ENCODE measurements at regions of chr12 and their contacts with region 1.

Region 1: GRCh38 chr12:51033457-51034089 is 7.4 kb upstream of the SLC11A2 start:
- DNase-seq: no peak
- ATAC-seq: no peak
- H3K4me3 ChIP-seq: no peak overlapping the region
- H3K27ac ChIP-seq: no peak overlapping the region
- H3K4me1 ChIP-seq: peaks cover 8% of the 10 kb centered on the region; the same call in 1 of the 2 replicates
- H3K27me3 ChIP-seq: no peaks in the 10 kb centered on the region
- CTCF ChIP-seq: no peak

Region 2: GRCh38 chr12:50187084-50187900 is 846.3 kb before region 1 on chr12:
- CTCF ChIA-PET with region 1: no interaction called
- POLR2A ChIA-PET with region 1: no interaction called
- in situ Hi-C with region 1: no loop called
- intact Hi-C with region 1: no loop called
- DNase-seq: no peak
- ATAC-seq: peak; percentile 26; the same call in 1 of the 2 replicates
- H3K4me3 ChIP-seq: no peak overlapping the region
- H3K27ac ChIP-seq: peak overlapping the region; percentile 73
- H3K4me1 ChIP-seq: peaks cover 29% of the 10 kb centered on the region
- H3K27me3 ChIP-seq: no peaks in the 10 kb centered on the region
- CTCF ChIP-seq: no peak

Region 3: DNA sequence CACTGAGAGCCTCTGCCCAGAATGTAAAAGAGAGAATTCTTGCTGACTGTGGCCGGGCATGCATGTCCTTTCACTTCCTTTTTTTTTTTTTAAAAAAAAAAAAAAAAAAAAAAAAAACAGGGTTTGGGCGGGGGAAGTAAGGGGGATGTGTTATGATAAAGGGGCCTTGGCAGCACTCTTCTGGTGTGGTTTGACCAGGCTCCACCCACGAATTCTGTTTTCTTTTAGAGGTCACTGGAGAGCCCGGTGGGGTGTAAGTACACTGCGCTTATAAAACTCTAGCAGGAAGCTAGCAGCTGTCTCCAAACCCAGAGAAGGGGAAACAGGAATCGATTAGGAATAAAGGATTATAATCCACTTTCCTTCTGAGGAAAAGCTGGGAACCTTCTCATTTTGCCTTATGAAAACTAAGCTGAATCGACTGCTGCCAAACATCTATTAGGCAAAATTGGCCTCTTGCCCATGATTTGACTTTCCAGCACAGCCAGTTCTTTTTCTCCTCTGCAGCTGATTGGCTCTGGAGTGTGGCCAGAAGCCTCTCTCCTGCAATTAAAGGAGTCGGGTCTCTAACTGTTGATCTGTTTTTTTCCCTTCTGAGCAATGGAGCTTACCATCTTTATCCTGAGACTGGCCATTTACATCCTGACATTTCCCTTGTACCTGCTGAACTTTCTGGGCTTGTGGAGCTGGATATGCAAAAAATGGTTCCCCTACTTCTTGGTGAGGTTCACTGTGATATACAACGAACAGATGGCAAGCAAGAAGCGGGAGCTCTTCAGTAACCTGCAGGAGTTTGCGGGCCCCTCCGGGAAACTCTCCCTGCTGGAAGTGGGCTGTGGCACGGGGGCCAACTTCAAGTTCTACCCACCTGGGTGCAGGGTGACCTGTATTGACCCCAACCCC is 108.9 kb before region 1 on chr12:
- CTCF ChIA-PET with region 1: interaction called, 16 read pairs
- POLR2A ChIA-PET with region 1: no interaction called
- in situ Hi-C with region 1: no loop called
- intact Hi-C with region 1: no loop called
- DNase-seq: no peak
- ATAC-seq: no peak
- H3K4me3 ChIP-seq: peak overlapping the region in 1 of 2 experiments; percentile 26; a peak in 1 of 4 replicates
- H3K27ac ChIP-seq: no peak overlapping the region
- H3K4me1 ChIP-seq: no peaks in the 10 kb centered on the region
- H3K27me3 ChIP-seq: no peaks in the 10 kb centered on the region
- CTCF ChIP-seq: no peak

Region 4: DNA sequence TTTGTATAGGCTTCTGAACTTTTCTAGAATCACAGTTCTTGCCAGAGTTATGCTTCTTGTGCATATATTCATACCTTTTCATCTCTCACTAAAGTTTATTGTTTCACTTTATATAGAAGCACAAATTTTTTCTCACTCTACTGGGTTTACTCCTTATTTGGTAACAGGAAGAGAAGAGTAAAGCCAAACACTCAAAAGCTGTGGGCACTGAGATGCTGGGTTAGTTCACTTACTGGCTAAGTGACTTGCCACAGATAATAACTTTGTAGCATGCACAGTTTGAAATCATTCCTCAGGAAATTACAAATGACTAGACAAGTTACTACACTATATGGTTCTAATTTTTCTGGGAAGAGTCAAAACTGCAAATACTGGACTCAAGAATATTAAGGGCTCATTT is 73.4 kb before region 1 on chr12:
- CTCF ChIA-PET with region 1: no interaction called
- POLR2A ChIA-PET with region 1: no interaction called
- in situ Hi-C with region 1: no loop called
- intact Hi-C with region 1: no loop called
- DNase-seq: no peak
- ATAC-seq: no peak
- H3K4me3 ChIP-seq: no peak overlapping the region
- H3K27ac ChIP-seq: no peak overlapping the region
- H3K4me1 ChIP-seq: no peaks in the 10 kb centered on the region
- H3K27me3 ChIP-seq: no peaks in the 10 kb centered on the region
- CTCF ChIP-seq: no peak

Region 5: DNA sequence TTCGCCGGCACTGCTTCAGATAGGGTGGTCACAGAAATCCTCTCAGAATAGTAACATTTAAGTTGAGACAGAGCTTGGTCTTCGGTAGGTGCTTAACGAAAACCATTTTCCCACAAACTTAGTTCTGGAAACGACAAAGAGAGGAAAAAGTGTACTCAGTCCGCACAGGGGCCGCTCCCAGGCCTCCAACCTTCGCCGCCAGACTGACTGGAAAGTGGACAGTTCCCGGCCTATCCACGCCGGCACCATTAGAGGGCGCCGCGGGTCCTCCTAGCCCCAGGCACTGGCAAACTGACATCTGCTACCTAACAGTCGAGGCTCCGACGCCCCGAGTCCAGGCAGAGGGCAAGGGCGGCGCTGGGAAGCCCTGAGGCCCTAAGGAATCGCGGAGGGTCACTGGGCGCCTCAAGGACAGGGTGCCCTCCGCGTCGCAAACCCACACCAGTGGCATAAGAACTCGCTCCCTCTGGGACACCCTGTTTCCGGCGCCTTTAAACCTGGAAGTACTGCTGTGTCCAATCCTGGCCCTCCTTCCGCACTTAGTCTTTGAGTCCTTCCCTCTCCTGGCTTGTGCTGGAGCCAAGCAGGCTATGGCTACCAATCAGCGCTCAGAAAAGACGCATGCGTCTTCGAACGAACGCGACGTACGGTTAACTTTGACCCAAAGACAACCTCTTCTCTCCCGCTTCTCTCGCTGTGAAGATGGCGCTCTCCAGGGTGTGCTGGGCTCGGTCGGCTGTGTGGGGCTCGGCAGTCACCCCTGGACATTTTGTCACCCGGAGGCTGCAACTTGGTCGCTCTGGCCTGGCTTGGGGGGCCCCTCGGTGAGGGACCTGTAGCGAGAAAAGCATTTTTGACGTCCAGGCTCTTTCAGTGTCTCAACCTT is 14.3 kb after region 1 on chr12 and contains the start of gene LETMD1:
- CTCF ChIA-PET with region 1: interaction called, 12 read pairs
- POLR2A ChIA-PET with region 1: no interaction called
- in situ Hi-C with region 1: no loop called
- intact Hi-C with region 1: no loop called
- DNase-seq: peak; percentile 97
- ATAC-seq: peak; percentile 100
- H3K4me3 ChIP-seq: peak within 1 kb of the TSS; percentile 75 to 100
- H3K27ac ChIP-seq: peak within 1 kb of the TSS; percentile 97
- H3K4me1 ChIP-seq: peaks cover 11% of the 10 kb centered on the region
- H3K27me3 ChIP-seq: no peaks in the 10 kb centered on the region
- CTCF ChIP-seq: peak; percentile 98
- total RNA-seq, gene LETMD1: 47.9 TPM

Measured in Panc1 (cell line).